ENCODE measurements at regions of chr17 and their contacts with region 1.

Region 1: DNA sequence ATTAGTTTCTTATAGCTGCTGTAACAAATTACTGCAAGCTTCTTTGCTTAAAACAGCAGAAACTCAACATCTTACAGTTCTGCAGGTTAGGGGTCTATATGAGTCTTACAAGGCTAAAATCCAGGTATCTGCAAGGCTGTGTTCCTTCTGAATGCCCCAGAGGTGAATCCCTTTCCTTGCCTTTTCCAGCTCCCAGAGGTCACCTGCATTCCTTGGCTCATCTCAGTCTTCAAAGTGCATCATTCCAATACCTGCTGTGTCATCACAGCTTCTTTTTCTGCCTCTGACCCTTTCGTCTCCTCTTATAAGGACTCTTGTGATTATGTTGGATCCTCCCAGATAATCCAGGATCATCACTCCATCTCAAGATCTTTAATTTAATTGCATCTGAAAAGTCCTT is 291.4 kb upstream of the CA10 start:
- DNase-seq: no peak
- H3K4me3 ChIP-seq: no peak overlapping the region
- H3K27ac ChIP-seq: no peak overlapping the region
- H3K4me1 ChIP-seq: no peaks in the 10 kb centered on the region
- H3K27me3 ChIP-seq: no peaks in the 10 kb centered on the region

Region 2: GRCh38 chr17:52336816-52337215 is 113.1 kb before region 1 on chr17:
- in situ Hi-C with region 1: no loop called
- DNase-seq: no peak
- H3K4me3 ChIP-seq: no peak overlapping the region
- H3K27ac ChIP-seq: no peak overlapping the region
- H3K4me1 ChIP-seq: no peaks in the 10 kb centered on the region
- H3K27me3 ChIP-seq: no peaks in the 10 kb centered on the region

Region 3: DNA sequence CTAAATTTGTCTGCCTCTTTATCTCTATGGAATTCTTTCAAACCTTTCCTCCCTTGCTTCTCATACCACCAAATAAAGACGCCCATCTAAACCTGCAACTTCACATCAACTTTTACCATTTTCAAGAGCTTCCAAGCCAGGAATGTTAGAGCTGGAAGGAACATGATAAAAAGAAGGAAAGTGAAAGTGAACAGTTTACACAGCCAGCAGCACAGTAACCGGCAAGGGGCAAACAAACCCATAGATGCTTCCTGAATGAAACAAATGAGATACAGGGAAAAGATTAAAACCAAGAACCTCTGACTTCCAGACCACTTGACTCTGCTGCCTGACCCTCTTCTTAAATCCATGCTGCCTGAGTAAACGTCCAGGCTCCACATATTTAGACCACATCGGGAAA is 60.3 kb before region 1 on chr17:
- in situ Hi-C with region 1: loop called (anchors 10 kb)
- DNase-seq: no peak
- H3K4me3 ChIP-seq: no peak overlapping the region
- H3K27ac ChIP-seq: no peak overlapping the region
- H3K4me1 ChIP-seq: no peaks in the 10 kb centered on the region
- H3K27me3 ChIP-seq: no peaks in the 10 kb centered on the region

Measured in GM23248 (cell line).